Activated CD4-positive, alpha-beta memory T cell treated with anti-CD3 and anti-CD28 coated beads, Interleukin-2, amount 10 ng/mL, durations not matched to agents 7 days and 5 days (primary cell): ENCODE measurements at regions of chr22 and their contacts with region 1.

Region 1: GRCh38 chr22:40107851-40108378 is 69.8 kb upstream of the TNRC6B start:
- DNase-seq: peak; percentile 41
- H3K4me3 Mint-ChIP-seq: peak overlapping the region; percentile 70
- H3K27ac Mint-ChIP-seq: peak overlapping the region; percentile 72
- H3K4me1 Mint-ChIP-seq: peaks cover 51% of the 10 kb centered on the region
- H3K27me3 Mint-ChIP-seq: no peaks in the 10 kb centered on the region

Region 2: GRCh38 chr22:40055143-40055883 is 52.6 kb before region 1 on chr22:
- CTCF ChIA-PET with region 1: no interaction called
- POLR2A ChIA-PET with region 1: interaction called, 15 read pairs
- DNase-seq: peak; percentile 35
- H3K4me3 Mint-ChIP-seq: peak overlapping the region; percentile 62
- H3K27ac Mint-ChIP-seq: peak overlapping the region; percentile 93
- H3K4me1 Mint-ChIP-seq: peaks cover 75% of the 10 kb centered on the region
- H3K27me3 Mint-ChIP-seq: no peaks in the 10 kb centered on the region

Region 3: DNA sequence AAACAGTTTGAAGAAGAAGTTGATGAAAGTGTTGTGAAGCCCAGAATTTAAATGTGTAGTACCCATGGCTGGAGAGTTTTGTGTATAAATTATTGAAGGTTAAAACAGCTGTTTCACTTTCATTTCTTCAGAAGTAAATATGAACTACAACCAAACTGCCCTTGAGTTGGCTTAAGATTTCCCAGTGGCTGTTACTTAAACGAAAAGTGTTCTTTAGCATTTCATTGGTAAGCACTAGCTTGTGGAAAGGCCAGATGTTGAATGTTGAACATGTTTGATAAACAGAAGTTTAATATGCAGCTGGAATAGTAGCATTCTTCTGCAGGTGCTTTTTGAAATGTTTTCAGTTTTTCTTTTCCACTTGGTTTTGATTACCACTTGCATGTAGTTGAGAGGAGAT is 13.4 kb before region 1 on chr22:
- CTCF ChIA-PET with region 1: interaction called, 7 read pairs
- POLR2A ChIA-PET with region 1: interaction called, 10 read pairs
- DNase-seq: no peak
- H3K4me3 Mint-ChIP-seq: peak overlapping the region; percentile 57
- H3K27ac Mint-ChIP-seq: peak overlapping the region; percentile 69
- H3K4me1 Mint-ChIP-seq: peaks cover 37% of the 10 kb centered on the region
- H3K27me3 Mint-ChIP-seq: no peaks in the 10 kb centered on the region